Activated T-helper 1 cell treated with anti-CD3 and anti-CD28 coated beads, Interleukin-12 subunit alpha, Interleukin-12 subunit beta, Interleukin-2, Interleukin-4 antibody, amounts not matched to agents 30 ng/mL and 10 ng/mL and 1 ng/mL, durations not matched to agents 14 hours and 24 hours and 36 hours (primary cell): ENCODE measurements at regions of chr22 and their contacts with region 1.

Region 1: DNA sequence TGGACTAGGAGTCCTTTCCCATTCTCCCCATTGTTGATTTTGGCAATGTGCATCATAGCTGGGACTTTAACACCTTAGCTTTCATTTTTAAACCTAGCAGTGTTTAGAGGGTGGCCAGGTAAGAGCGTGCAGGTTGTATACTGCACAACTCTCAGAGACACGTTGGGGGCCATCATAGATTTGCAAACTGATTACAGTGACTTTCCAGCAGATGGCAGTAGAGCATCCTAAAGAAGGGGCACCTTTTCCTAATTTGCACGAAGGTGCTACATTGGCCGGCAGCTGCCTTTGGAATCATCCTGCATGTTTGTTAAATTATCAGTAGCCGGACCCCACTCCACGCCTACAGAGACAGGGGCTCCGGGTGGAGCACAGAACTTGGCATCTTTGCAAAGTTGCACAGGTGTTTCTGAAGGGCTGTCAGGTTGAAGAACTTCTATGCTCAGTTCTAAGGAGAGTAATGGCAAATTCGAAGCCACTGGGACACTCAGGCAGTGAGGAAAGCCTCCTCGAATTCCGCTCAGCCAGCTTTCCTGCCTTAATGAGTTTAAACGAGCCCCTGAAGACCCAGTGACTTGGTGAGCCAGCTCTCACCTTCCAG is 7.7 kb downstream of the LHFPL7 start:
- DNase-seq: peak; percentile 31
- H3K4me3 Mint-ChIP-seq: no peak overlapping the region
- H3K27ac Mint-ChIP-seq: no peak overlapping the region
- H3K4me1 Mint-ChIP-seq: no peaks in the 10 kb centered on the region
- H3K27me3 Mint-ChIP-seq: peaks cover 2% of the 10 kb centered on the region

Region 2: GRCh38 chr22:24977370-24978221 is 38.8 kb after region 1 on chr22:
- intact Hi-C with region 1: no loop called
- DNase-seq: no peak
- H3K4me3 Mint-ChIP-seq: no peak overlapping the region
- H3K27ac Mint-ChIP-seq: no peak overlapping the region
- H3K4me1 Mint-ChIP-seq: no peaks in the 10 kb centered on the region
- H3K27me3 Mint-ChIP-seq: peaks cover 14% of the 10 kb centered on the region

Region 3: GRCh38 chr22:25048659-25049647 is 110.1 kb after region 1 on chr22:
- intact Hi-C with region 1: loop called (anchors 1 kb)
- DNase-seq: peak; percentile 58
- H3K4me3 Mint-ChIP-seq: no peak overlapping the region
- H3K27ac Mint-ChIP-seq: no peak overlapping the region
- H3K4me1 Mint-ChIP-seq: no peaks in the 10 kb centered on the region
- H3K27me3 Mint-ChIP-seq: peaks cover 5% of the 10 kb centered on the region

Region 4: GRCh38 chr22:25172153-25172552 is 233.3 kb after region 1 on chr22:
- intact Hi-C with region 1: loop called (anchors 1 kb)
- DNase-seq: no peak
- H3K4me3 Mint-ChIP-seq: no peak overlapping the region
- H3K27ac Mint-ChIP-seq: no peak overlapping the region
- H3K4me1 Mint-ChIP-seq: peaks cover 5% of the 10 kb centered on the region
- H3K27me3 Mint-ChIP-seq: no peaks in the 10 kb centered on the region